Mucosa of descending colon (tissue), 3 donors: ENCODE measurements at regions of chr3 and their contacts with region 1.

Region 1: DNA sequence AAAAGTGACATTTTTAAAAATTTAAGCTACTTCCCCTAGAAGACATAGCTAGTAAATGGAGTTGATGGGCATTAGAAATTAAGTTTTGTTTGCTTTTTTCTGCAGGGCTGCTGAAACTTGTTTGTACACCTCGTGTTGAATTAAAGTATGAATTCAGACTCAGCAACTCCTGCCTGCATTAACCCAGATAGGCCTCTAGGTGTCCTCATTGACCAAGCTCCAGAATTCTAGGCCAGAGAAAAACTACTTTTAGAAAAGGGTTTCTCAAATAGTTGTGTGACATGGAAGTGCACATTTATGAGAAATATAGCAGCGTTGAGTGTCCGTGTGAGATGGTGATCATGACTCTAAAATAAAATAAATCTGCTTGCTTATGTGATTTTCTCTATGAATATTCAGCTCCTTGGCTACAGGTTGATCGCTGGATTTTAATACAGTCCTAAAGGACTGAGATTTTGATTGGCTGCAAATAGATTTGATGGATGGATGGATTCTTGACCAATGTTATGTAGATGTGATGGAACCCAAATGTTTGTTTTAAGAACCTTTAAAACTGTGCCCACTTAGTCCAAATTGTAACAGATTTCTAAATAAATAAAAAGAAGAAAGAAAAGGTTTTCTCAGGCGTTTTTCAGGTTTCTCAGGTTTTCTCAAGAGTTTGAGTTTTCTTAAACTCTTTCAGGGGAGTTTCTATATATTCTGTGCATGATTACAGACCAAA is 39.4 kb upstream of the LMOD3 start:
- DNase-seq: peak in 1 of 3 donors; percentile 50
- ATAC-seq: peak; percentile 81
- H3K4me3 ChIP-seq: no peak overlapping the region
- H3K4me1 ChIP-seq: no peaks in the 10 kb centered on the region
- CTCF ChIP-seq: peak; percentile 88

Region 2: GRCh38 chr3:69072928-69073327 is 88.8 kb before region 1 on chr3:
- intact Hi-C with region 1: no loop called
- DNase-seq: no peak
- ATAC-seq: no peak
- H3K4me3 ChIP-seq: no peak overlapping the region
- H3K4me1 ChIP-seq: no peaks in the 10 kb centered on the region
- CTCF ChIP-seq: no peak

Region 3: GRCh38 chr3:69306239-69307185 is 144.8 kb after region 1 on chr3:
- intact Hi-C with region 1: loop called (anchors 1 to 5 kb)
- DNase-seq: peak; percentile 57 to 64 (median 61)
- ATAC-seq: peak; percentile 99
- H3K4me3 ChIP-seq: no peak overlapping the region
- H3K4me1 ChIP-seq: no peaks in the 10 kb centered on the region
- CTCF ChIP-seq: peak; percentile 76

Region 4: GRCh38 chr3:69425261-69425660 is 263.5 kb after region 1 on chr3:
- intact Hi-C with region 1: loop called in 1 of 2 experiments (anchors 10 kb)
- DNase-seq: peak in 1 of 3 donors; percentile 53
- ATAC-seq: peak; percentile 61
- H3K4me3 ChIP-seq: no peak overlapping the region
- H3K4me1 ChIP-seq: no peaks in the 10 kb centered on the region
- CTCF ChIP-seq: no peak

Region 5: GRCh38 chr3:69671082-69671952 is 509.6 kb after region 1 on chr3:
- intact Hi-C with region 1: loop called in 1 of 2 experiments (anchors 10 kb)
- DNase-seq: peak in 1 of 3 donors; percentile 77
- ATAC-seq: no peak
- H3K4me3 ChIP-seq: no peak overlapping the region
- H3K4me1 ChIP-seq: no peaks in the 10 kb centered on the region
- CTCF ChIP-seq: peak; percentile 40